Endothelial cell of umbilical vein (primary cell): ENCODE measurements at regions of chr21 and their contacts with region 1.

Region 1: DNA sequence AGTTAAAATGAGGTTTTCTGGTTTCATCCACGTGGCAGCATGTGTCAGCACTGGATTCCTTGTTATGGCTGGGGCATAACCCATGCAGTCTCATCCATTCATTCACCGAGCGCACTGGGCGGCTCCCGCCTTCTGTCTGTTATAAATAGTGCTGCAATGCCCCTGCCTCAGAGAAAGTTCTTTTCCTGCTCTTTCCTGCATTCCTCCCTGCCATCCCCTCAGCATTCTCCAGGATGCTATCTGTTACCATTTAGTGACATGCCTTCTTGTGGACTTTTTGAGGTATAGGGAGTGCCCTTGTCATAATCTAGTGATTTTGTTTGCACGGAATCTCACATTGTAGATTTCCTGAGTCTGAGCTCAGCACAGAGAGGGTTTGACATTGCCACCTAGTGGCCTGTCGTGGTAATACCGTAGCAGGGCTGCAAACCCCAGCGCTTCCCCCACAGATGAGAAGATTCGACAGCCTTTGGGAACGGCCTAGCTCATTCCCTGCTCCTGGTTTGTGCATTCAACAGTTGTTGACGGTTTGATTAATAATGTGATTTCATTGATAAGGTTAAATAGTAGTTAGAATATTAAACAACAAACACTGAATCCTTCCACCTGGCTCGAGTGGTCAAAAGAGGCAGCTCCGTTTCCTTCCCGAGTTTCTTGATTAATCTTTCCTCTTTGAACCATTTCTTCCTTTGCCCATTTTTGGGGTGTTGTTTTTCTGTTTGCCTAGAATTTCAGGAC is 46.3 kb downstream of the UMODL1 start:
- DNase-seq: peak; percentile 78
- H3K4me3 ChIP-seq: peak overlapping the region in 1 of 3 experiments; percentile 51
- H3K27ac ChIP-seq: no peak overlapping the region
- H3K4me1 ChIP-seq: peaks cover 4% of the 10 kb centered on the region
- H3K27me3 ChIP-seq: peaks cover 26 to 33% of the 10 kb centered on the region in 2 experiments
- CTCF ChIP-seq: peak; percentile 87 to 91
- POLR2A ChIP-seq: no peak

Region 2: GRCh38 chr21:41612674-41613532 is 504.5 kb before region 1 on chr21:
- CTCF ChIA-PET with region 1: interaction called, 22 read pairs
- POLR2A ChIA-PET with region 1: no interaction called
- dilution Hi-C with region 1: no loop called
- intact Hi-C with region 1: loop called (anchors 1 kb)
- DNase-seq: no peak
- H3K4me3 ChIP-seq: no peak overlapping the region
- H3K27ac ChIP-seq: no peak overlapping the region
- H3K4me1 ChIP-seq: no peaks in the 10 kb centered on the region
- H3K27me3 ChIP-seq: peaks cover 0 to 2% of the 10 kb centered on the region in 2 experiments
- CTCF ChIP-seq: peak; percentile 50 to 76
- POLR2A ChIP-seq: no peak

Region 3: GRCh38 chr21:41816220-41817165 is 300.9 kb before region 1 on chr21:
- CTCF ChIA-PET with region 1: interaction called, 120 read pairs
- POLR2A ChIA-PET with region 1: no interaction called
- dilution Hi-C with region 1: no loop called
- intact Hi-C with region 1: loop called (anchors 1 kb)
- DNase-seq: peak; percentile 54
- H3K4me3 ChIP-seq: no peak overlapping the region
- H3K27ac ChIP-seq: no peak overlapping the region
- H3K4me1 ChIP-seq: no peaks in the 10 kb centered on the region
- H3K27me3 ChIP-seq: no peaks in the 10 kb centered on the region
- CTCF ChIP-seq: peak; percentile 82 to 90
- POLR2A ChIP-seq: no peak

Region 4: DNA sequence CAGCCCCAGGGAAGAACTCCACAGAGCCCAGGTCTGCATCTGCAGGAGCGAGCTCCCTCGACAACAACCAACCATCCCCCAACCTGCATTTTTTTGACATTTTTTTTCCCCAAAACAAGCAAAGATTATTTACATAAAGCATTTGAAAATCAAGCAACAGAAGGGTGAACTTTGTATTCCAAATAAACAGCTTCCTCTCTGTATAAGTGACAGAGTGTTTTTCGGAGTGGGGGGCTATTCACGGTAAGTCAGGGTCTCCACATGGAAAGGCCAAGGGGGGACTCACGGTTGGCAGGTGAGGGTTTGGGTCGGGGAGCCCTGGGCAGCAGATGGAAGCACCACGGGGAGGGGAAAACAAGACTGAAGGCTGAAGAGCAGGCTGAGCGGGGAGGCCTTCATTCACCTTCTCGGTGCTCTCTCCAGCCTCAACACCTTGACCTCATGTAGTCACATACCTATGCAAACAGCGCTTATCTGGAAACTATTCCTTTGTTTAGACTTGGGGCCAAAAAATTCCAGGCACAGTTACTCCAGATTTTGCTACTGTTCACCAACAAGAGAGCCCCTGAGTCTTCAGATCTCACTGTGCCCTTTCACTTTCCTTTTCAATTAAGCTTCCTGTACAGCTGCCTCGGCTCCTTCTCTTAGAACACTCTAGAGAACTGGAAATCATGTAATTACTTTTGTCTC is 191.1 kb before region 1 on chr21:
- CTCF ChIA-PET with region 1: interaction called, 93 read pairs
- POLR2A ChIA-PET with region 1: no interaction called
- dilution Hi-C with region 1: no loop called
- intact Hi-C with region 1: no loop called
- DNase-seq: peak; percentile 84
- H3K4me3 ChIP-seq: peak overlapping the region; percentile 0 to 40 (median 14)
- H3K27ac ChIP-seq: peak overlapping the region; percentile 62
- H3K4me1 ChIP-seq: peaks cover 13% of the 10 kb centered on the region
- H3K27me3 ChIP-seq: no peaks in the 10 kb centered on the region
- CTCF ChIP-seq: no peak
- POLR2A ChIP-seq: no peak

Region 5: DNA sequence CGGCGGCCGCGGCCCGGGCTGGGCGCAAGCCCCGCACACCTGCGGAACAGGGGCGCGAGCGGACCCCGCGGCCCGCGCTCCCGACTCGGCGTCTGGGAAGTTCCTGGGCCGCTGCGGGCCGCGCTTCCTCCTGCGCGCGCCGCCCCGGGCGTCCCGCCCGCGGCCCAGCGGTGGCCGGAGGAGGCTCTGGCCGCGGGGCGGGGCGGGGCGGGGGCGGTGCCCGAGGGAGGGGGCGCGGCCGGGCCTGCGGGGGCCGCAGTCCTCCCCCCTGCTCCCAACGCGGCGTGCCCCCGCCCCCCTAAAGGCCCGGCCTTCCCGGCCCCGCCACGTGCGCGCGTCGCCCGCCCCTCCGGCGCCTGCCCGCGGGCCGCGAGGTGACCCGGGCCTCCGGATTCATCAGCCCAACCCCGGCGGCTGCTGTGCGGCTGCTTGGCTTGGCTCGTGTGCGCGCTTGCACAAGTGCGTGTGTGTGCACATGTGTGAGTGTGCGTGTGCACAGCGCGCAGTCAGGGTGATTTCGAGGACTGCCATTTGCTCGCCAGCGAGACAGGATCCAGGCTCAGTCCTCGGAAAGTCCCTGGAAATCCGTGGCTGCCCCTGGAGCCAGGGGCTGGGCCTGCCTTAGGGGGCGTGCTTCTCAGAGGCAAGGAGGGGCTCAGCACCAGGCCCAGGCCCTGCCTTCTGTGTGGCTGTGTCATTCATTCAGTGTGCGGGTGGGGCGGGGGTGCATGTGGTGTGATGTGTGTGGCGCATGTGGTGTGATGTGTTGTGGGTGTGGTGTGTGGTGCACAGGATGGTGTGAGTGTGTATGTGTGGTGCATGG is 163.4 kb before region 1 on chr21 and contains the start of gene C2CD2:
- CTCF ChIA-PET with region 1: interaction called, 16 read pairs
- POLR2A ChIA-PET with region 1: no interaction called
- dilution Hi-C with region 1: no loop called
- intact Hi-C with region 1: no loop called
- DNase-seq: peak; percentile 86
- H3K4me3 ChIP-seq: peak within 1 kb of the TSS; percentile 36 to 74 (median 72)
- H3K27ac ChIP-seq: peak within 1 kb of the TSS; percentile 64
- H3K4me1 ChIP-seq: peaks cover 36% of the 10 kb centered on the region
- H3K27me3 ChIP-seq: no peaks in the 10 kb centered on the region
- CTCF ChIP-seq: peak in 1 of 2 donors; percentile 20
- POLR2A ChIP-seq: peak; percentile 59
- total RNA-seq, gene C2CD2: 33.6 and 41.2 TPM in 2 replicates

Region 6: GRCh38 chr21:42009831-42010523 is 107.4 kb before region 1 on chr21 and contains the start of gene ZBTB21:
- CTCF ChIA-PET with region 1: interaction called, 11 read pairs
- POLR2A ChIA-PET with region 1: no interaction called
- dilution Hi-C with region 1: no loop called
- intact Hi-C with region 1: loop called (anchors 2 kb)
- DNase-seq: peak; percentile 98
- H3K4me3 ChIP-seq: peak within 1 kb of the TSS; percentile 47 to 70 (median 55)
- H3K27ac ChIP-seq: peak within 1 kb of the TSS; percentile 70
- H3K4me1 ChIP-seq: peaks cover 15% of the 10 kb centered on the region
- H3K27me3 ChIP-seq: peaks cover 3 to 14% of the 10 kb centered on the region in 2 experiments
- CTCF ChIP-seq: no peak
- POLR2A ChIP-seq: peak; percentile 80
- total RNA-seq, gene ZBTB21: 10.8 and 12.4 TPM in 2 replicates

Region 7: GRCh38 chr21:42097860-42098454 is 19.4 kb before region 1 on chr21:
- CTCF ChIA-PET with region 1: interaction called, 12 read pairs
- POLR2A ChIA-PET with region 1: no interaction called
- dilution Hi-C with region 1: no loop called
- intact Hi-C with region 1: no loop called
- DNase-seq: peak; percentile 97
- H3K4me3 ChIP-seq: no peak overlapping the region
- H3K27ac ChIP-seq: peak overlapping the region; percentile 85
- H3K4me1 ChIP-seq: peaks cover 13% of the 10 kb centered on the region
- H3K27me3 ChIP-seq: peaks cover under 1 to 7% of the 10 kb centered on the region in 2 experiments
- CTCF ChIP-seq: no peak
- POLR2A ChIP-seq: no peak